Right cardiac atrium (tissue), 5 donors: ENCODE measurements at regions of chr12 and their contacts with region 1.

Region 1: GRCh38 chr12:18224745-18225144 is 36.6 kb upstream of the PIK3C2G start:
- DNase-seq: no peak
- ATAC-seq: no peak
- H3K4me3 ChIP-seq: no peak overlapping the region
- H3K27ac ChIP-seq: no peak overlapping the region
- H3K4me1 ChIP-seq: peaks cover 2% of the 10 kb centered on the region
- H3K27me3 ChIP-seq: no peaks in the 10 kb centered on the region

Region 2: GRCh38 chr12:18139989-18140596 is 84.7 kb before region 1 on chr12:
- intact Hi-C with region 1: loop called in 1 of 4 experiments (anchors 10 kb)
- DNase-seq: no peak
- ATAC-seq: no peak
- H3K4me3 ChIP-seq: no peak overlapping the region
- H3K27ac ChIP-seq: no peak overlapping the region
- H3K4me1 ChIP-seq: no peaks in the 10 kb centered on the region
- H3K27me3 ChIP-seq: no peaks in the 10 kb centered on the region

Region 3: DNA sequence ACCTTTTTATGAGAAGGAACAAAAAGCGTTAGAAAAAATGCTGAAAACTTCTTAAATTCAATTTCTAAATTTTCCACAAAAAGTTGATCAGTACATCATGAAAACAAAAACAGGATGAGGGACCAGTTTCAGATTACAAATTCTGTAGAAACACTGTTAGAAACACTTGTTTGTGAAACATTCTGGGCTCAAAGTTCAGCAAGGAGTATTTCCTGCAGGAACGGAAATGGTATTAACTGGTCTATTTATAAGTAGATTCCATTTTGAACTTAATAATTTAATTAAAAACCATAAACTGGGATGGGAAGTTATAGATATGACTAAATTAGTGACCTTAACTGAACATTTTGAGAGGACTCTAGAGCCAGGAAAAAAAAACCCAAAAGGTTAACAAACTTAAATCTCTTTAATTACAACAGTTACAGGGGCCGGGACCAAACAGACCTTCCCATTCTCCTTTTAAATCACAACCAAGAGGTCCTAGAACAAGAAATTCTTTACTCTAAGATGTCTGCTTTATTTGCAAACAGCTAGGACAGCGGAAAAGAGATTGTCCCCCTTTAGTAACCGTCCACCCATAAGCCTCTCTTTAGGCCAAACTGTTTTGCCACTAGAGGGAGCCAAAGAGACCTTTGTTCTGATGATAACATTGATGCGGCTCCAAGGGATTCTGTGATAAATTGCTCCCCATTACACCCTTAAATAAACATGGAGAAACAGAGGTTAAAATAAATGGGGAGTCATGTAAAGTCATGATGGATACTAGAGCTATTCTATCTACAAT is 65.8 kb before region 1 on chr12:
- intact Hi-C with region 1: loop called in 1 of 4 experiments (anchors 10 kb)
- DNase-seq: no peak
- ATAC-seq: no peak
- H3K4me3 ChIP-seq: no peak overlapping the region
- H3K27ac ChIP-seq: no peak overlapping the region
- H3K4me1 ChIP-seq: no peaks in the 10 kb centered on the region
- H3K27me3 ChIP-seq: no peaks in the 10 kb centered on the region

Region 4: DNA sequence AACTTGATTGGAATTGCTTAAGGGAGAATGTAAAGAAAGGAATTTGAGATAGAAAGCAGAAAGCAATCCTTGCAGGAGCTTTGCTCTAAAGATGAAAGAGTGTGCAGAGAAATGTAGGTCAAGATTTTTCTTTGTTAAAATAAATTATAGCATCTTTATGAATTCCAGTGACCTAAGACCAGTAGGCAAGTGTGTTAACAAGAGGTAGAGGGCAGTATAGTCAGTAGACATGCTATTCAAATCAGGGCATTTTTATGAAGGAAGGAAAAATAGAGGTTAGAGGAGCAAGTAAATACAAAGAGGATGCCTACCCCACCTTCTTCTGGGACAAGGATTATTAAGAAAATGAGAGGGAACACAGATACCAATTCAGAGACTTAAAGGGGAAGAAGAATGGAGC is 364.6 kb after region 1 on chr12:
- intact Hi-C with region 1: no loop called
- DNase-seq: no peak
- ATAC-seq: no peak
- H3K4me3 ChIP-seq: no peak overlapping the region
- H3K27ac ChIP-seq: no peak overlapping the region
- H3K4me1 ChIP-seq: no peaks in the 10 kb centered on the region
- H3K27me3 ChIP-seq: no peaks in the 10 kb centered on the region